ENCODE measurements at regions of chr12 and their contacts with region 1.

Region 1: GRCh38 chr12:32755654-32756475 is at the start of gene YARS2:
- DNase-seq: peak; percentile 93
- ATAC-seq: peak; percentile 85
- H3K4me3 ChIP-seq: peak within 1 kb of the TSS; percentile 78 to 97 (median 91)
- H3K4me3 Mint-ChIP-seq: peak within 1 kb of the TSS; percentile 93
- H3K27ac ChIP-seq: peak within 1 kb of the TSS; percentile 64 to 65
- H3K27ac Mint-ChIP-seq: peak within 1 kb of the TSS; percentile 89
- H3K4me1 ChIP-seq: peaks cover 12 to 15% of the 10 kb centered on the region in 2 donors
- H3K4me1 Mint-ChIP-seq: peaks cover 19% of the 10 kb centered on the region
- H3K27me3 ChIP-seq: no peaks in the 10 kb centered on the region
- H3K27me3 Mint-ChIP-seq: no peaks in the 10 kb centered on the region
- CTCF ChIP-seq: peak; percentile 92
- total RNA-seq, gene YARS2: 18.8 and 24.3 TPM in 2 replicates

Region 2: DNA sequence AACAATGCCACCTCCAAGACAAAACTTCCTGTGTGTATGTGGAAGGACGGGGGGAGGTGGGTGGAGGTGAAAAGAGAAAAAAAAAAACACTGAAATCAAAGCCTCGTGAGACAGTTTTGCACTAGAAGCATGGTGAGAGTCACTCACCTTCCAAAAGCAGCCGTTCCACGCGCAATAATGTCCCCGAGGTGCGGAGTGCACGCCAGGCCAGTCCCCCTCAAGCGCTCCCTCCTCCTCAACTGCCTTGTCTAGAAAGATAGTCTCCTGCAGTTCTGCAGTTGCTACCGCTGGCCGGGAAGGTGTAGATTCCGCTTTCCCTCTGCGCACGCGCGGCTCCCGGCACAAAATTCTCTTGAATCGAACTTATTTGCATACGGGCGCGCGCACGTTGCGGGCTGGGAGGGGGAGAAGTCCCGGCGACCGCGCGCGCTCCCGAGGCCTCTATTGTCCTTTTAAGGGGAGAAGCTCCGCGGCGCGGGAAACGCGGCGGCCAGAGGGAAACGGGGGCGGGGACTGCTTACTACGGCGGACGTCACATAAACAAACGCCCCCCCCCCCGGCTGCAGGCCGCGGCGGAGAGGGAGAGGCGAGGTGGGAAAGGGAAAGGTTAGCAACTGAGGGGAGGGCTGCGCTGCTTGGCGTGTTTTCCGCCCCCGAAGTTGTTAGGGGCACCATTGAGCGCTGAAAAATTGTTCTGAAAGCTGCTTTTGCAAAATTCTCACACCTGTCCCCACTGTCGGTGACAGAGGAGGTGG is 1429.8 kb before region 1 on chr12 and contains the start of gene SINHCAF:
- CTCF ChIA-PET with region 1: no interaction called
- POLR2A ChIA-PET with region 1: no interaction called
- intact Hi-C with region 1: loop called (anchors 5 kb)
- DNase-seq: peak; percentile 99
- ATAC-seq: peak; percentile 64
- H3K4me3 ChIP-seq: peak within 1 kb of the TSS; percentile 70 to 96 (median 93)
- H3K4me3 Mint-ChIP-seq: peak within 1 kb of the TSS; percentile 98
- H3K27ac ChIP-seq: peak within 1 kb of the TSS; percentile 97
- H3K27ac Mint-ChIP-seq: peak within 1 kb of the TSS; percentile 99
- H3K4me1 ChIP-seq: peaks cover 27 to 36% of the 10 kb centered on the region in 2 donors
- H3K4me1 Mint-ChIP-seq: peaks cover 39% of the 10 kb centered on the region
- H3K27me3 ChIP-seq: no peaks in the 10 kb centered on the region
- H3K27me3 Mint-ChIP-seq: no peaks in the 10 kb centered on the region
- CTCF ChIP-seq: no peak
- total RNA-seq, gene SINHCAF: 127 and 129 TPM in 2 replicates

Region 3: GRCh38 chr12:32666018-32666417 is 89.8 kb before region 1 on chr12:
- CTCF ChIA-PET with region 1: no interaction called
- POLR2A ChIA-PET with region 1: no interaction called
- intact Hi-C with region 1: no loop called
- DNase-seq: no peak
- ATAC-seq: no peak
- H3K4me3 ChIP-seq: no peak overlapping the region
- H3K4me3 Mint-ChIP-seq: no peak overlapping the region
- H3K27ac ChIP-seq: no peak overlapping the region
- H3K27ac Mint-ChIP-seq: no peak overlapping the region
- H3K4me1 ChIP-seq: no peaks in the 10 kb centered on the region
- H3K4me1 Mint-ChIP-seq: no peaks in the 10 kb centered on the region
- H3K27me3 ChIP-seq: no peaks in the 10 kb centered on the region
- H3K27me3 Mint-ChIP-seq: peaks cover 3% of the 10 kb centered on the region
- CTCF ChIP-seq: no peak

Region 4: GRCh38 chr12:32679091-32679919 is 76.6 kb before region 1 on chr12 and contains the start of gene DNM1L:
- CTCF ChIA-PET with region 1: no interaction called
- POLR2A ChIA-PET with region 1: interaction called, 5 read pairs
- intact Hi-C with region 1: loop called (anchors 1 kb)
- DNase-seq: peak; percentile 93
- ATAC-seq: peak; percentile 96
- H3K4me3 ChIP-seq: peak within 1 kb of the TSS; percentile 62 to 92 (median 86)
- H3K4me3 Mint-ChIP-seq: peak within 1 kb of the TSS; percentile 93
- H3K27ac ChIP-seq: peak within 1 kb of the TSS; percentile 63 to 79
- H3K27ac Mint-ChIP-seq: peak within 1 kb of the TSS; percentile 90
- H3K4me1 ChIP-seq: peaks cover 14 to 23% of the 10 kb centered on the region in 2 donors
- H3K4me1 Mint-ChIP-seq: peaks cover 34% of the 10 kb centered on the region
- H3K27me3 ChIP-seq: no peaks in the 10 kb centered on the region
- H3K27me3 Mint-ChIP-seq: no peaks in the 10 kb centered on the region
- CTCF ChIP-seq: no peak
- total RNA-seq, gene DNM1L: 74.2 and 76.0 TPM in 2 replicates

Region 5: DNA sequence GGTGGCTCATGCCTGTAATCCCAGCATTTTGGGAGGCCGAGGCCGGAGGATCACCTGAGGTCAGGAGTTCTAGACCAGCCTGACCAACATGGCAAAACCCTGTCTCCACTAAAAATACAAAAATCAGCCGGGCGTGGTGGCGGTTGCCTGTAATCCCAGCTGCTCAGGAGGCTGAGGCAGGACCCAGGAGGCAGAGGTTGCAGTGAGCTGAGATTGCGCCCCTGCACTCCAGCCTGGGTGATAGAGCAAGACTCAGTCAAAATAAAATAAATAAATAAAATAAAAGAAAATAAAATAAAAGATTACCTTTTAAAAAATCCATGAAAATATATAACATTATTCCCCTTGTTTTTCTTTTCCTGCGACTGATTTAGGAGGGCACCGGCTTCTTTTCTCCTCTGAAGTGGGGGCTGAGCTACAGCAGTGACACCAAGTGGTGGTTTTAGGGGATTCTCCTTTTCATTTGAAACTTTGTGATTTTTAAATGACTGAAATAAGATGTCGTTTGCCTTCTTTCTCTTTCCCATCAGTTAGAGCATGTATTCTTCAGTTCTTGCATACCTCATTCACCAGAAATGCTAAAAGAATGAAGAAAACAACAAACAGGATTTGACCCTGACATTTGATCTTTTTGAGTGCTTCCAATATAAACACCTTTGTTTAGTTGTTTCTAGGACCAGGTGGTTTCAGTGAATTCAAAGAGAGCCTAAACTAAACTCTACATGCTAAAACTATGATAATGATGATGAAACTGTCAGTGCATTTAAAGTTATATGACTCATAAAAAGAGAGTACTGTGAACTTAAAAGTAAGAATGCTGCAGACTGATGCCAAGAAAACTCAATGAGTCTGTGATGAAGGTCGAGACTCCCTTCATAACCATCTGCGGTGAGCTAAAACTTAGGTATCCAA is 163.3 kb after region 1 on chr12:
- CTCF ChIA-PET with region 1: interaction called, 24 read pairs
- POLR2A ChIA-PET with region 1: no interaction called
- intact Hi-C with region 1: no loop called
- DNase-seq: no peak
- ATAC-seq: no peak
- H3K4me3 ChIP-seq: no peak overlapping the region
- H3K4me3 Mint-ChIP-seq: no peak overlapping the region
- H3K27ac ChIP-seq: no peak overlapping the region
- H3K27ac Mint-ChIP-seq: no peak overlapping the region
- H3K4me1 ChIP-seq: no peaks in the 10 kb centered on the region
- H3K4me1 Mint-ChIP-seq: no peaks in the 10 kb centered on the region
- H3K27me3 ChIP-seq: no peaks in the 10 kb centered on the region
- H3K27me3 Mint-ChIP-seq: peaks cover 17% of the 10 kb centered on the region
- CTCF ChIP-seq: no peak

Region 6: DNA sequence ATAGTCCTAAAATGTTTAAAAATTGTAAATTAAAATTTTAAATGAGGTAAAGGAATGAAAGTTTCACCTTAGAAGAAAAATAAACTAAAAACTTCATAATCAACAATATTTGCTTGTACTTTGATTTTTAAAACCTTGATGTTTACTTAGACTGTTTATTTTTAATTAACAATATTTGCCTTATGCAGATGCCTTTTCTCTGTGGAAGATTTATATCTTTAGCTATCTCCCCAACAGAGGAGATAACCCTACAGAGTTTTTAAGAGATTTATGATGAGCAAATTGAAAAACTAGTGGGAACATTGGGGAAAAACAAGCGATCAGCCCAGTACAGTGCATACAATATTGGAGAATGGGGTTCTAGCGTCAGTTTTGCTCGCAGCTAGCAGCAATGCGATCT is 267.9 kb after region 1 on chr12:
- CTCF ChIA-PET with region 1: no interaction called
- POLR2A ChIA-PET with region 1: no interaction called
- intact Hi-C with region 1: no loop called
- DNase-seq: no peak
- ATAC-seq: no peak
- H3K4me3 ChIP-seq: no peak overlapping the region
- H3K4me3 Mint-ChIP-seq: no peak overlapping the region
- H3K27ac ChIP-seq: no peak overlapping the region
- H3K27ac Mint-ChIP-seq: no peak overlapping the region
- H3K4me1 ChIP-seq: no peaks in the 10 kb centered on the region
- H3K4me1 Mint-ChIP-seq: no peaks in the 10 kb centered on the region
- H3K27me3 ChIP-seq: no peaks in the 10 kb centered on the region
- H3K27me3 Mint-ChIP-seq: no peaks in the 10 kb centered on the region
- CTCF ChIP-seq: no peak

Region 7: DNA sequence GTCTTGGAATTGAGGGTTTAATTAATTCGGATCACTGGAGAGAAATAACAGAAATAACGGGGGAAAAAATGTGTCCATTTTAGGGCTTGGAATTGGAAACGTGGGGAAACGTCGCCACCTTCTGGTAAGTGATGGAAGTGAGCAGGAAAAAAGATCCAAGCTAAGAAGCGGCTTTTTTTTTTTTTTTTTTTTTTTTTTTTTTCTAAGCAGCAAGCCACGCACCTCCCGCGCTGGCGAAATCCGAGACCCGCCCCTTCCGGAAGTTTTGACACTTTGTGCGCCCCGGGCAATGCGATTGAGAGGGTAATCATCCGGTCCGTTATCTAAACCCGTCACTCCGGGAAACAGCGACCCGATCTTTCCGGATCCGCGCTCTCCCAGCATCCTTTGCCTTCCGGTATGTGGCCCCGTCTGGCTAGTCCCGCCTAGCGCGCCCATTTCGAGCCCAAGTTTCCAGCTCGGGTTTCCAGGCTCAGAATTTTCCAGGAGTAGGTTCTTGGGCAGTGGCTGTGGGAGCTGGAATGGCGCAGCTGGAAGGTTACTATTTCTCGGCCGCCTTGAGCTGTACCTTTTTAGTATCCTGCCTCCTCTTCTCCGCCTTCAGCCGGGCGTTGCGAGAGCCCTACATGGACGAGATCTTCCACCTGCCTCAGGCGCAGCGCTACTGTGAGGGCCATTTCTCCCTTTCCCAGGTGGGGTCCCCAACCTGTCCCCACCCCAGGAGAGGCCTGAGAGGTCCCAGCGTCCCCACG is 1266.4 kb after region 1 on chr12 and contains the start of gene ALG10:
- CTCF ChIA-PET with region 1: interaction called, 84 read pairs
- POLR2A ChIA-PET with region 1: interaction called, 12 read pairs
- intact Hi-C with region 1: loop called (anchors 1 kb)
- DNase-seq: peak; percentile 97
- ATAC-seq: peak; percentile 96
- H3K4me3 ChIP-seq: peak within 1 kb of the TSS; percentile 47 to 90 (median 79)
- H3K4me3 Mint-ChIP-seq: peak within 1 kb of the TSS; percentile 96
- H3K27ac ChIP-seq: peak within 1 kb of the TSS; percentile 89 to 90
- H3K27ac Mint-ChIP-seq: peak within 1 kb of the TSS; percentile 96
- H3K4me1 ChIP-seq: peaks cover 6 to 8% of the 10 kb centered on the region in 2 donors
- H3K4me1 Mint-ChIP-seq: peaks cover 19% of the 10 kb centered on the region
- H3K27me3 ChIP-seq: no peaks in the 10 kb centered on the region
- H3K27me3 Mint-ChIP-seq: peaks cover 2% of the 10 kb centered on the region
- CTCF ChIP-seq: peak; percentile 78
- total RNA-seq, gene ALG10: 15.8 and 17.0 TPM in 2 replicates